ENCODE measurements at regions of chr1 and their contacts with region 1.

Region 1: GRCh38 chr1:25805863-25806225 is 5.9 kb downstream of the SELENON start:
- DNase-seq: peak in 9 of 10 donors; percentile 63 to 87 (median 76)
- H3K4me3 ChIP-seq: peak overlapping the region in 3 of 59 donors; percentile 11 to 19 (median 12)
- H3K27ac ChIP-seq: peak overlapping the region in 57 of 59 donors; percentile 39 to 93 (median 83)
- H3K27me3 ChIP-seq: no peaks in the 10 kb centered on the region
- CTCF ChIP-seq: no peak

Region 2: DNA sequence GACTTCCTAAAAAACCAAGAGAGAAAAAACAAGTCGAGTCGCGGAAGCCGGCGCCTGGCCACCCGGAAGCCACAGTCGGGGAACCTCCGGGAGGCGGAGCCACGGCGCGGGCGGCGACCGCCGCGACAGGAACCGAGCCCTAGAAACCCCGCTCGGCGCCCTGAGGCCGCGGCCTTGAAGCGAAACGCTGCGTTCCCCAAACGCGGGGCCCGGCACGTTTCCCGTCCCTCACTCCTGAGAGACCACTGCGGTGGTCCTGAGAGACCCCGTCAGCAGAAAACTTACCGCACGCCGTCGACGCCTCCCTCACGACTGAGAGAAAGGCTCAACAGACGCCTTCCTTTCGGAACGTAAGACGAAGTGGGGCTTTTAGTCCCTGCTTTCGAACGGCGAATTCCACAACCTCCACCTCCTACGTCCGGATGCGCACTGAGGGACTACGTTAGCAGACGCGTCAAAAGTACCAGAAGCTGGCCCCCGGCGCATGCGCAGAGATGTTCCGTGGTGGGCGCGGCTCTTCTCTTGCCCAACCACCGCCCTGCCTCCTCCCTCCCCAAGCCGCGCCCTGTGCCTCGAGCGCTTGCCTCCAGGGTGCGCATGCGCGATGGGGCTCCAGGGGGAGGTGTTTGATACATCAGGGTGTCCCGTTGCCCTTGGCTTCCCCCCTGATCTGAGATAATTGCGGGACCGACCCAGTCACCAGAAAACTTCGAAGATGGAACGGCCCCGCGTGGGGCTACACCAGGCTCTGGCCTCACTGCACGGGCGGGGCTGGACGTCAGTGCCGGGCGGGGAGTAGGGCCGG is 558.6 kb before region 1 on chr1 and contains the start of gene RSRP1:
- intact Hi-C with region 1: loop called (anchors 5 to 10 kb)
- DNase-seq: peak; percentile 99 to 100 (median 99)
- H3K4me3 ChIP-seq: peak within 1 kb of the TSS; percentile 72 to 100 (median 97)
- H3K27ac ChIP-seq: peak within 1 kb of the TSS; percentile 86 to 100 (median 100)
- H3K27me3 ChIP-seq: no peaks in the 10 kb centered on the region
- CTCF ChIP-seq: peak in 27 of 56 donors; percentile 2 to 49 (median 29)
- total RNA-seq, gene RSRP1: 87.8 to 261 (median 154) TPM

Region 3: DNA sequence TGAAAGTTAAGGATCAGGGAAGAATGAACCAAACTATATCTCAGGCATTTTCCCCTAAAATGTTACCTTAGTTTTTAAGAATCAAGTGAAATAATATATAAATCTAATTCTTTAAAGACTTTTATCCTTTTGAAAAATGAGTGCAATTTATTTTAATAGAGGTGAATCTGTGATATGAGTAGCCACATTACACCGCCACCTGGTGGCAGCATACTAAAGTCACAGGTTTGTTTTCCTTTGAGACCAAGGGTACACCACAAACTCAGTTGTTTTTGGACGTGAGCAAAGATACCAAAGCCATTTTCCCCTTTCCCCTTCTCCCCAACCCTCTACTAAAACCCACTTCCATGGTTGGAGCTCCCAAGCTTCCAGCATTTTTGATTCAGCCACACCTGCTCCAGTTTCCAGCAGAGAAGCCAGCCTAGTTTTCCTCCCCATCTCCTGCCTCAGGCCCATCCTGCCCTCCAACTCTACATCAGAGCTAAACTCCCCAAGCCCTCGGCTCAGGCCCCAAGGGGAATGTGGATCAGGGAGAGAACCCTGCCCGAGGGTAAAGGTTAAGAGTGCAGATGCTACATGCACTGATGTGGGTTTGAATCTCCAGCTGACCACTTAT is 285.3 kb before region 1 on chr1:
- intact Hi-C with region 1: loop called in 1 of 2 experiments (anchors 5 kb)
- DNase-seq: peak in 8 of 10 donors; percentile 48 to 85 (median 76)
- H3K4me3 ChIP-seq: no peak overlapping the region
- H3K27ac ChIP-seq: peak overlapping the region in 26 of 59 donors; percentile 3 to 70 (median 38)
- H3K27me3 ChIP-seq: no peaks in the 10 kb centered on the region
- CTCF ChIP-seq: peak; percentile 67 to 97 (median 89)